H1 (cell line): ENCODE measurements at regions of chr15 and their contacts with region 1.

Region 1: GRCh38 chr15:40421246-40422157 is 15.9 kb downstream of the IVD start:
- DNase-seq: peak; percentile 62 to 95
- H3K4me3 ChIP-seq: peak overlapping the region in 1 of 4 experiments; percentile 45; a peak in 3 of 8 replicates
- H3K27ac ChIP-seq: no peak overlapping the region
- H3K4me1 ChIP-seq: peaks cover 0 to 6% (median 3%) of the 10 kb centered on the region in 4 experiments; a peak in 4 of 7 replicates
- H3K27me3 ChIP-seq: peaks cover 0 to 2% (median 0%) of the 10 kb centered on the region in 4 experiments; a peak in 1 of 7 replicates
- CTCF ChIP-seq: peak; percentile 95 to 97 (median 96)
- EP300 ChIP-seq: no peak
- POLR2A ChIP-seq: peak in 1 of 2 experiments; percentile 38; a peak in 1 of 3 replicates
- RAD21 ChIP-seq: peak; percentile 91 to 95

Region 2: DNA sequence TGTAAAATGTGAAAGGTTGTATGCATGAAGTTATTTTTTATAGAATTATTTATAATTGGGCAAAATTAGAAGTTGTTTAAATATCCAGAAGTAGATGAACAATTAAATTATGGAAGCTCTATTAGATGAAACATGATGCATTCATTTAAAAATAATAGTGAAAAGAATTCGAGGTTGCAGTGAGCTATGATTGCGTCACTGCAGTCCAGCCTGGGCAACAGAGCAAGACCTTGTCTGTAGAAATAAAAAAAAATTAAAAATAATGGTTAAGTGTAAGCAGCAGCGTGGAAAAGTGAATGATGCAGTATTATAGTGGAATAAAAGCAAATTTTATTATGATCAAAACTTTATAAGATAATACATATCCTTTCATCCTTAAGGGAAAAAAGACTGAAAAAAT is 246.3 kb before region 1 on chr15:
- CTCF ChIA-PET with region 1: no interaction called
- POLR2A ChIA-PET with region 1: no interaction called
- DNase-seq: no peak
- H3K4me3 ChIP-seq: no peak overlapping the region
- H3K27ac ChIP-seq: no peak overlapping the region
- H3K4me1 ChIP-seq: no peaks in the 10 kb centered on the region
- H3K27me3 ChIP-seq: no peaks in the 10 kb centered on the region
- CTCF ChIP-seq: no peak
- EP300 ChIP-seq: no peak
- POLR2A ChIP-seq: no peak
- RAD21 ChIP-seq: no peak

Region 3: DNA sequence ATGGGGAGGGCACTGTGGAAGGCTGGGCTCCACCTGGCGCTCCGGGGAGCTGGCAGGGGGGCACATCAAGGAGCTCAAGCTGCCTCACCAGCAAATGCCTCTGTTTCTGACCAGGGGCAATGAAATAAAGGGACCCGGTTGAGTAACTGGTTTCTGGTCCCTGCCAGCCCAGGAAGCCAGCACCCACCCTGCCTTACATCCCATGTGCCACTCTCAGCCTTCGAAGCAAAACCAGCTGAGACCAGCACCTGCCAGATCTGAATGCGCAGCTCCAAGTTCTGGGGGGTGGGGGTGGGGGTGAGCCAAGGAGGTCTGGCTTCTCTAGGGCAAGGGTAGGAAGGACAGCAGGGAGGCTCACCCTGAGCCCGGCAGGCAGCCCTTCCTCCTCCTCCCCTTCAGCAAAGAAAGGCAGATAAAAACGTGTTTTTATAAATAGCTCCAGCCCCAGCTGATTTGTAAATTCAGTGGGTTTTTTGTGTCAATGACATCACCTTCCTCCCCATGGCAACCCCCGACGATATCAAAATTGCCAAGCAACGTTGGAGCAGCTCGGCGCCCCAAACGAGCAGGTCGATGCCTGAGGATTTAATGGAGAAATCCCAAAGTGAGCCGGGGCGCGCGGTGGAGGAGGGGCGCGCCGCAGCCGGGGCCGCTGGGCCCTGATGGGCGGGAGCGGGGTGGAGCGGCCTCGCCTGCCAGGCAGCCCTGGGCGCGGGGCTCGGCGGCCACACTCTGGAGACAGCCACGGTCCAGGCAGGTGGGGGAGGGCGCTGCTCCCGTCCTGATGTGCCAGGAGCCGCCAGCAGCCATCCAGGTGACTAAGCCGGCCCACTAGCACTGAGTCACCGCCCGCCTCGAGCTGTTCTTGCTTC is 182.7 kb before region 1 on chr15 and contains the start of gene PAK6:
- CTCF ChIA-PET with region 1: no interaction called
- POLR2A ChIA-PET with region 1: no interaction called
- DNase-seq: peak; percentile 60 to 90
- H3K4me3 ChIP-seq: peak within 1 kb of the TSS; percentile 14 to 54 (median 30); a peak in 7 of 8 replicates
- H3K27ac ChIP-seq: no peak within 1 kb of the TSS
- H3K4me1 ChIP-seq: peaks cover 9 to 18% (median 14%) of the 10 kb centered on the region in 4 experiments
- H3K27me3 ChIP-seq: peaks cover 0 to 6% (median 2%) of the 10 kb centered on the region in 4 experiments; a peak in 2 of 7 replicates
- CTCF ChIP-seq: peak in 1 of 3 experiments; percentile 4; a peak in 1 of 4 replicates
- EP300 ChIP-seq: no peak
- POLR2A ChIP-seq: peak in 1 of 2 experiments; percentile 64; a peak in 2 of 3 replicates
- RAD21 ChIP-seq: no peak
- total RNA-seq, gene PAK6: 9.0 and 9.4 TPM in 2 replicates

Region 4: GRCh38 chr15:40323239-40323952 is 98.1 kb before region 1 on chr15 and contains the start of gene INAFM2:
- CTCF ChIA-PET with region 1: interaction called, 28 read pairs
- POLR2A ChIA-PET with region 1: interaction called, 5 read pairs
- DNase-seq: peak; percentile 90 to 92
- H3K4me3 ChIP-seq: peak within 1 kb of the TSS; percentile 62 to 79 (median 70)
- H3K27ac ChIP-seq: no peak within 1 kb of the TSS
- H3K4me1 ChIP-seq: peaks cover 21 to 44% (median 31%) of the 10 kb centered on the region in 4 experiments
- H3K27me3 ChIP-seq: peaks cover 0 to 20% (median 9%) of the 10 kb centered on the region in 4 experiments; a peak in 4 of 7 replicates
- CTCF ChIP-seq: peak; percentile 22 to 36 (median 30)
- EP300 ChIP-seq: peak in 1 of 2 experiments; percentile 58; a peak in 1 of 3 replicates
- POLR2A ChIP-seq: peak in 1 of 2 experiments; percentile 49; a peak in 1 of 3 replicates
- RAD21 ChIP-seq: peak in 1 of 2 experiments; percentile 20; a peak in 1 of 4 replicates
- total RNA-seq, gene INAFM2: 35.1 and 38.2 TPM in 2 replicates

Region 5: GRCh38 chr15:40367686-40368611 is 53.6 kb before region 1 on chr15:
- CTCF ChIA-PET with region 1: interaction called, 9 read pairs
- POLR2A ChIA-PET with region 1: interaction called, 22 read pairs
- DNase-seq: peak; percentile 81 to 89
- H3K4me3 ChIP-seq: peak overlapping the region in 3 of 4 experiments; percentile 15 to 46 (median 23); a peak in 4 of 8 replicates
- H3K27ac ChIP-seq: no peak overlapping the region
- H3K4me1 ChIP-seq: peaks cover 2 to 6% (median 4%) of the 10 kb centered on the region in 4 experiments; a peak in 4 of 7 replicates
- H3K27me3 ChIP-seq: peaks cover 5 to 27% (median 23%) of the 10 kb centered on the region in 4 experiments
- CTCF ChIP-seq: peak; percentile 77 to 89 (median 77)
- EP300 ChIP-seq: peak; percentile 58 to 77; a peak in 2 of 3 replicates
- POLR2A ChIP-seq: no peak
- RAD21 ChIP-seq: peak; percentile 41 to 64

Region 6: DNA sequence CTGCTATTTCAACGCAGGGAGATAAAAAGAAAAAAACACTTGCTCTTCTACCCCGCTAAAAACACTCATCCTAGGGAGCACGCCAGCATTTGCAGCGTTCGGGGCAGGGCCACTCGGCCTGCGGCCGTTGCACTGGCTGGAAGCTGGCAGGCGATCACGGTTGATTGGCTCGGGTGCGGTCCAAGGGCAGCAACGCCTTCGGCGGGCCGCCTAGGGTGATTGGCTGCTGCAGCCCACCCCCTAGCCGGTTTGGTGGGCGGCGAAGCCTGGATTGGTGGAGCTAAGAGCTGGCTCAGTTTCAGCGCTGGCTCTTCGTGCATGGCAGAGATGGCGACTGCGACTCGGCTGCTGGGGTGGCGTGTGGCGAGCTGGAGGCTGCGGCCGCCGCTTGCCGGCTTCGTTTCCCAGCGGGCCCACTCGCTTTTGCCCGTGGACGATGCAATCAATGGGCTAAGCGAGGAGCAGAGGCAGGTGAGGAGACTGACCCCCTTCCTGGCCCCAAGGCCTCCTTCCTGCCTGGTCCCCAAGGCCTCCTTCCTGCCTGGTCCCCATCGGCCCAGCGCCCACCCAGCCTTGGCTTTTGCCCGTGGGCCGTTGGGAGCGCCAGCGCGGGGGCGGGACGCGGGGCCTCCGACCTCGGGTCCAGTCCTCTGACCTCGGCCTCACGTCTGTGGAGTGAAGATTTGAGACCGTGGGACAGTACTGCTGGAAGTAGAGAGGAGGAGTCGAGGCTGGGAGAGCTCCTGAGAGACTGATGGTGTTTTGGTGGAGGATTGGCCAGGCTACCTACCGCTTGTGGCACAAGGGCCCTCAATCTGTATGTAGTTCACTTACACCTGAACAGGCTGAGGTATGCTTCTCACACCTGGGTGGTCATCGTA is 15.8 kb before region 1 on chr15 and contains the start of gene IVD:
- CTCF ChIA-PET with region 1: interaction called, 27 read pairs
- POLR2A ChIA-PET with region 1: interaction called, 77 read pairs
- DNase-seq: peak; percentile 78 to 92
- H3K4me3 ChIP-seq: peak within 1 kb of the TSS; percentile 67 to 82 (median 74)
- H3K27ac ChIP-seq: peak within 1 kb of the TSS; percentile 72; the same call in 1 of the 2 replicates
- H3K4me1 ChIP-seq: peaks cover 0 to 4% (median 1%) of the 10 kb centered on the region in 4 experiments; a peak in 3 of 7 replicates
- H3K27me3 ChIP-seq: no peaks in the 10 kb centered on the region
- CTCF ChIP-seq: no peak
- EP300 ChIP-seq: no peak
- POLR2A ChIP-seq: peak; percentile 84 to 88
- RAD21 ChIP-seq: no peak
- total RNA-seq, gene IVD: 78.8 and 80.0 TPM in 2 replicates

Region 7: GRCh38 chr15:40452296-40453090 is 31.0 kb after region 1 on chr15:
- CTCF ChIA-PET with region 1: interaction called, 24 read pairs
- POLR2A ChIA-PET with region 1: interaction called, 4 read pairs
- DNase-seq: no peak
- H3K4me3 ChIP-seq: no peak overlapping the region; a peak in 1 of 8 replicates
- H3K27ac ChIP-seq: no peak overlapping the region; the same call in 1 of the 2 replicates
- H3K4me1 ChIP-seq: peaks cover 4 to 41% (median 19%) of the 10 kb centered on the region in 4 experiments
- H3K27me3 ChIP-seq: no peaks in the 10 kb centered on the region
- CTCF ChIP-seq: no peak
- EP300 ChIP-seq: no peak
- POLR2A ChIP-seq: no peak
- RAD21 ChIP-seq: no peak